ENCODE measurements at regions of chr3 and their contacts with region 1.

Region 1: DNA sequence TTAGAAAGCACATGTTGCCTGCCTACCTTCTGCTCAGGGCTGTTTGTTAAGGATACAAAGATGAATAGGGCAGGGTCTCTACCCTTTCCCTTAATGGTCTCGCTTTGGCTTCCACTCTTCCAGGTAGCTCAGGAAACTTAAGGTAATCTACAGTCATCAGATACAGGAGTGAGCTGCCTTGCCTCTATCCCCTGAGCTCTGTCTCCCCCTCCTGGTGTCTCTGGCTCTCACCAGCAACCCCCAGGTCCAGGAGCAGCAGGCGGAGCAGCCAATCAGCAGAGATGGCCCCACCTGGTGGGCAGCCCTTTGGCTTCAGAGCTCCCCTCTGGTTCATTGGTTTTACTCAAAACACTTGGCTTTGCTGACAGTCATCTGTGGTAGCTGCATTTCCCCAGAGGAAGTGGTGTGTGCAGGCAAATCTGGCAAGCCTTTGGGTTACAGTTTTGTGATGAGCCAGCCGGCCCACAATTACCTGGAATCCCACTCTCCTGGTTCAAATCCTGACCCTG is 8.5 kb upstream of the CX3CR1 start:
- H3K4me3 ChIP-seq: no peak overlapping the region
- H3K27ac ChIP-seq: no peak overlapping the region
- H3K4me1 ChIP-seq: no peaks in the 10 kb centered on the region
- CTCF ChIP-seq: peak; percentile 82

Region 2: GRCh38 chr3:38950581-38950980 is 337.8 kb before region 1 on chr3:
- CTCF ChIA-PET with region 1: no interaction called
- POLR2A ChIA-PET with region 1: no interaction called
- H3K4me3 ChIP-seq: no peak overlapping the region
- H3K27ac ChIP-seq: no peak overlapping the region
- H3K4me1 ChIP-seq: no peaks in the 10 kb centered on the region
- CTCF ChIP-seq: no peak

Region 3: DNA sequence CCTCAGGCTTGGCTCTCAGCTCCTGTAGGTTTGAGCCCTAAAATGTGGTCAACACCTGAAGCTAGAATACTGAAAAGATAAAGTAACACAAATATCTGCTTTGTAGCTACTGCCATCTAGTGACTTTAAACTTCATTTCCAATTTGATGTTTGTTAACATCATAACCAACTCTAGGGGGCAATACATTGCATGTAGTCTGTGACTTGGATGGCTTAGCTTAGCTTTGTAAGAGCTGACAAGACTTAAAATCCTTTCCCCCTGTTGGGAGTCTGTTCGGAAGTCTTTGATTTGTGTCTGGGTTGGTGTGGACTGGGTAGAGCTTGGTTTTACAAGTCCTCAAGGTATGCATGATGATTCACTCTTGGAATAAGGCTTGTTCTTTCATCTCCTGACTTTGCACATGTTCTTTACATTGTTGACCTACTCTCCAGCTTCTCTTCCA is 288.3 kb before region 1 on chr3:
- CTCF ChIA-PET with region 1: interaction called, 21 read pairs
- POLR2A ChIA-PET with region 1: no interaction called
- H3K4me3 ChIP-seq: no peak overlapping the region
- H3K27ac ChIP-seq: no peak overlapping the region
- H3K4me1 ChIP-seq: no peaks in the 10 kb centered on the region
- CTCF ChIP-seq: peak; percentile 52; the same call in 1 of the 2 replicates

Region 4: DNA sequence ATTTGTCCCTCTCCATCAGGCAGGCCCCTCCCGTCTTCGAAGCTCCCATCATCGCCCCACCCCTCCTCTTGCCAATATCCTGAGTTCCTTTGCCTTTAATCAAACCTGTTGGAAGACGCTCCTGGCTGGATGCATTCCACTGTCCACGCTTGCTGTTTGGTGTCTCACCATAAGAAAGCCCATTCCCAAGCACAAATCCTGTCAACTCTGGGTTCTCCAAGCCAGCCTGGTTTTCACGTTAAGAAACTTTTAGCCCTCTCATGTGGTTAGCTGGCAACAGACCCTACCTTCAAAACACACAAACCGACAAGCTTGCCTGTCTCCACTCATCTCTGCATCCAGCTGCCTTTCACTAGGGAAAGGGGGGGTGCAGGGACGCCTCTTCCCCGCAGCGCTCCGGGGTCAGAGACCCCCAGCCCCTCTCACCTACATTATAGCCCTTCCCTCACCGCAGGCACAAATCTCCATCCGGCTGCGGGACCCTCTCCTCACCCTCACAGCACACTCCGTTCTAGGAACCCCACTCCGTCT is 182.0 kb before region 1 on chr3:
- CTCF ChIA-PET with region 1: interaction called, 11 read pairs
- POLR2A ChIA-PET with region 1: no interaction called
- H3K4me3 ChIP-seq: peak overlapping the region; percentile 85
- H3K27ac ChIP-seq: no peak overlapping the region; the same call in 1 of the 2 replicates
- H3K4me1 ChIP-seq: no peaks in the 10 kb centered on the region
- CTCF ChIP-seq: no peak

Region 5: DNA sequence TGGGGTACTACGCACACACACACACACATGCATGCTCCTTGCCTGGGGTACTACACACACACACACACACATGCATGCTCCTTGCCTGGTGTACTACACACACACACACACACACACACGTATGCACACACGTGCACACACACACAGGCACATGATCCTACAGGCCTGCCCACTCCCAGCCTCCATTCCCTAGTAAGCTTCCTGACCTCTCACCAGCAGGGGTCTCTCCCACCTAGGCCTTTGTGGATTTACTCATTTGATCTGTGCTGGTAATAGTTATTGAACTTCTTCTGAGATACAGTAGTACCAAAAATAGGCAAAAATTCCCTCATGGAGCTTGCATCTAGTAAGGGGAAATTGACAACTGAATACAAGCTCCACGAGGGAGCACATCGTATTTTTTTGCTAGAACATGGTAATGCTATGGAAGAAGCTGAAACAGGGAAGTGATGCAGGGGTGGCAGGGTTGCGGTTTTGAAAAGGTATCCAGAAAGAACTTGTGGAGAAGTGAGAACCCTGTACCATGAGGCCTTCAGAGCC is 161.8 kb before region 1 on chr3:
- CTCF ChIA-PET with region 1: interaction called, 145 read pairs
- POLR2A ChIA-PET with region 1: interaction called, 4 read pairs
- H3K4me3 ChIP-seq: no peak overlapping the region
- H3K27ac ChIP-seq: no peak overlapping the region
- H3K4me1 ChIP-seq: no peaks in the 10 kb centered on the region
- CTCF ChIP-seq: peak; percentile 70

Region 6: DNA sequence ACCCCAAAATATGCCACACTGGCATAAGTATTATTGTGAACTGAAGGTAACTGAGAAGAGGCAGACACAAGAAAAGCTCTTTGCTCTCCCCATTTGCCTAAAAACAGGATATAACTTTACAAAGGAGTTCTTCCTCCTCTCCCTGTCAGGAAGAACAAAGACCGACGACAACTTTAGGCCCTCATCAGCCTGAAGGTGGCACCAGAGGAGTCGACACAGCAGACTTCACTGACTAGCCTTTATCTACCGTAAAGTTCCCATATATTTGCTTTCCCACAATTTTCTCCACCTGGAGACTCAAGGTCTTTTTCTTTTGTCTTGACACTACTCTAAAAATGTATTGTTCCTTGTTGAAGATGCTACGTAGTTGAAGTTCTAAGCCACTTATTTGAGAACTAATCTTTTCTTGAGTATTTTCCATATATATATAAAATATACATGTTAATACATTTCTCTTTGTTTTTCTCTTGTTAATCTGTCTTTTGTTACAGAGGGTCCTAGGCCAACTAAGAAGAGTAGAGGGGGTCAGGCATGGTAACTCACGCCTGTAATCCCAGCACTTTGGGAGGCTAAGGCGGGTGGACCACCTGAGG is 79.8 kb before region 1 on chr3:
- CTCF ChIA-PET with region 1: interaction called, 12 read pairs
- POLR2A ChIA-PET with region 1: no interaction called
- H3K4me3 ChIP-seq: no peak overlapping the region
- H3K27ac ChIP-seq: no peak overlapping the region
- H3K4me1 ChIP-seq: no peaks in the 10 kb centered on the region
- CTCF ChIP-seq: no peak

Region 7: GRCh38 chr3:39260957-39261356 is 27.4 kb before region 1 on chr3:
- CTCF ChIA-PET with region 1: interaction called, 12 read pairs
- POLR2A ChIA-PET with region 1: no interaction called
- H3K4me3 ChIP-seq: no peak overlapping the region
- H3K27ac ChIP-seq: no peak overlapping the region
- H3K4me1 ChIP-seq: no peaks in the 10 kb centered on the region
- CTCF ChIP-seq: no peak

Measured in HEK293 (cell line).